WTC11 (cell line): ENCODE measurements at regions of chr15 and their contacts with region 1.

Region 1: DNA sequence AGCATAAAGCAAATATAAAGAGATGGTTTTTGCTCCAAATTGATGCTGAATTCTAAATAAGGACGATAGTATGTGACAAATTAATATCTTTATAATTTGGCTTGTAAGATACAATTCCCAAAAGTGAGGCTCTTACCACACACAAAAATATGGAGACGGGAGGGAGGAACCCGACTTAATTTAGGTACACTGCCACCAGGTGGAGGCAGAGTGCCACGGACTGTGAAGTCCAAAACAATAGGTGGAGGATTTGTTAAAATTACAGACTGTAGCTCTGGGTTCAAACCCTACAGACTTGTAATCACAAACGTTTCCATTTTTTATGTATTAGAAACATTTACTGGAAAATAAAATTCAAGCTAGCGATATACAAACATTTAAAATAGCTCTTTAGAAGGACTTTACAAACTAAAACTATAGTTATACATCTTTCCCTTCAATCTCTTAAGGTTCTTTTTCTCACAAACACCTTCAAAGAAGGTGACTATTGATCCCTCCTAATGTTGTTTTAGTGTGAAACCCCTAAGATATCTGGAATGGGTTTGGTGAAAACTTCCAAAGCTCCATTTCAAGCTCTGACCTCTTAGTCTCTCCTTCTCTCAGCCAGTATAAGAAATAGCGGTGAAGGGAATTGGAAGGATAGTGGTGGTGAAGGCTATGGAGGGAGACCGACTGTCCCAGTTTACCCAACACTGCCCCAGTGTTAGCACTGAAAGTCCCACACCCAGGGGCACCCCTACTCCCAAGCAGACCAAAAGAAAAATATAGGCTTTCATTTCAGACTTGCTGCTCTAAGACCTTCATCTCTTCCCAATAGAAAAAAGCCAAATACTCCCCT is 89.7 kb downstream of the AQP9 start:
- DNase-seq: peak; percentile 77
- ATAC-seq: peak; percentile 40; the same call in 1 of the 2 replicates
- H3K4me3 Mint-ChIP-seq: no peak overlapping the region
- H3K27ac Mint-ChIP-seq: no peak overlapping the region
- H3K4me1 Mint-ChIP-seq: peaks cover 45% of the 10 kb centered on the region
- H3K27me3 Mint-ChIP-seq: peaks cover 14% of the 10 kb centered on the region
- CTCF ChIP-seq: peak; percentile 78

Region 2: DNA sequence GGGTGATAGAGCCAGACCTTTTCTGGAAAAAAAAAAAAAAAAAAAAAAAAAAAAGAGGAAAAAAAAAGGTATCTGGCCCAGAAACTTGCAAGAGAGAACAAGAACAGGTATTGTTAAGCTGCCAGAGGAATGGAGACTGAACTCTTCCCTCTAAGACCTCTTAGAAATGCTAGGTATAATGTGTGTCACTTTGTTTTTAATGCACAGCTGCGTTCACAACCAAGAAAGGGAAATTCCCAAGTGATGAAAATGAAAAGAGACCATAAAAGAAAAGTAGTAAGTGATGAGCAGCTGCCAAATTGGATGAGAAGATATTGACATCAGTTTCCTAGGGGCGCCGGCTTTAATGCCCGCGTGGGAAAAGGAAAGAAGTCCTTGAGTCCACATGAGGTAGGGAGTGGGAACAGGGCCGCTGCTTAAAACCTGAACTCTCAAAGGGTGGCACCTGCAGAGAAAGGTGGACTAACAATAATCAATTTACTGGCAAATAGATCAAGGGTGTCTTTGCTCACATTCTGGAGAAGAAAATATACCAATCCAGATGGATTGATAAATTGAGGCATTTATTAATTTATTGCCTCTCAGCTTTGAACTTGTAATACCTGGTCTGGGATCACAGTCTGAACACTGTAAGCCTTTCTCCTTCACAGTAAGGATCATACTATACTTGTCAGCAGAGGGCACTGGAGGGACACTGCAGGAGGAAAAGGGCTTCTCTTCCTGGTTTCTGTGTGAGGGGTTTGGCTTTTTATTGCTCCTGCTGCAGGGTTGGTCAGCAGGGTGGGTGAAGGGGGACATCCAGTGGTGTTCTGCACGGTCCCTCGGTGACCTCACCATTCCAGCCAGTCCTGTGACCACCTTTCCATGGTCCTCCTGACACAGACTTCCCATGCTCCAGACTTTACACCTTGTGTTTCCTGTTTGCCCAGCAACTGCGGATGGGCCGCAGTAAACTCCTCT is 41.8 kb after region 1 on chr15:
- CTCF ChIA-PET with region 1: interaction called, 10 read pairs
- POLR2A ChIA-PET with region 1: no interaction called
- DNase-seq: peak; percentile 44
- ATAC-seq: peak; percentile 98
- H3K4me3 Mint-ChIP-seq: no peak overlapping the region
- H3K27ac Mint-ChIP-seq: no peak overlapping the region
- H3K4me1 Mint-ChIP-seq: peaks cover 10% of the 10 kb centered on the region
- H3K27me3 Mint-ChIP-seq: peaks cover 3% of the 10 kb centered on the region; the same call in 1 of the 2 replicates
- CTCF ChIP-seq: peak; percentile 37; the same call in 1 of the 2 replicates